ENCODE measurements at regions of chr19 and their contacts with region 1.

Region 1: GRCh38 chr19:38233740-38234251 is 9.8 kb upstream of the DPF1 start:
- DNase-seq: peak; percentile 27
- H3K4me3 ChIP-seq: no peak overlapping the region
- H3K27ac ChIP-seq: no peak overlapping the region
- H3K27me3 ChIP-seq: peaks cover 5% of the 10 kb centered on the region
- CTCF ChIP-seq: peak; percentile 89

Region 2: GRCh38 chr19:38120471-38121025 is 113.2 kb before region 1 on chr19:
- CTCF ChIA-PET with region 1: no interaction called
- POLR2A ChIA-PET with region 1: no interaction called
- DNase-seq: no peak
- H3K4me3 ChIP-seq: no peak overlapping the region
- H3K27ac ChIP-seq: no peak overlapping the region
- H3K27me3 ChIP-seq: no peaks in the 10 kb centered on the region
- CTCF ChIP-seq: no peak

Region 3: GRCh38 chr19:38162094-38162493 is 71.7 kb before region 1 on chr19:
- CTCF ChIA-PET with region 1: interaction called, 11 read pairs
- POLR2A ChIA-PET with region 1: no interaction called
- DNase-seq: no peak
- H3K4me3 ChIP-seq: no peak overlapping the region
- H3K27ac ChIP-seq: no peak overlapping the region
- H3K27me3 ChIP-seq: no peaks in the 10 kb centered on the region
- CTCF ChIP-seq: no peak

Region 4: GRCh38 chr19:38291855-38292254 is 58.1 kb after region 1 on chr19:
- CTCF ChIA-PET with region 1: no interaction called
- POLR2A ChIA-PET with region 1: no interaction called
- DNase-seq: no peak
- H3K4me3 ChIP-seq: no peak overlapping the region
- H3K27ac ChIP-seq: no peak overlapping the region
- H3K27me3 ChIP-seq: no peaks in the 10 kb centered on the region
- CTCF ChIP-seq: no peak

Region 5: GRCh38 chr19:38303517-38304349 is 69.9 kb after region 1 on chr19 and contains the start of gene C19orf33:
- CTCF ChIA-PET with region 1: no interaction called
- POLR2A ChIA-PET with region 1: no interaction called
- DNase-seq: no peak
- H3K4me3 ChIP-seq: no peak within 1 kb of the TSS
- H3K27ac ChIP-seq: no peak within 1 kb of the TSS
- H3K27me3 ChIP-seq: no peaks in the 10 kb centered on the region
- CTCF ChIP-seq: no peak
- polyA plus RNA-seq, gene C19orf33: 0.38 TPM in 1 of 2 replicates, not detected in the other

Measured in AG04450 (cell line).